A673 (cell line): ENCODE measurements at regions of chr9 and their contacts with region 1.

Region 1: GRCh38 chr9:34591248-34591916 is 1.9 kb upstream of the CNTFR start:
- DNase-seq: peak; percentile 74
- H3K4me3 ChIP-seq: peak overlapping the region; percentile 37
- H3K27ac ChIP-seq: no peak overlapping the region
- H3K4me1 ChIP-seq: peaks cover 15% of the 10 kb centered on the region
- H3K27me3 ChIP-seq: peaks cover 40% of the 10 kb centered on the region
- CTCF ChIP-seq: peak; percentile 93

Region 2: GRCh38 chr9:34178520-34179212 is 412.7 kb before region 1 on chr9 and contains the start of gene UBAP1:
- CTCF ChIA-PET with region 1: no interaction called
- POLR2A ChIA-PET with region 1: no interaction called
- intact Hi-C with region 1: no loop called
- DNase-seq: peak; percentile 99
- H3K4me3 ChIP-seq: peak within 1 kb of the TSS; percentile 78
- H3K27ac ChIP-seq: peak within 1 kb of the TSS; percentile 93
- H3K4me1 ChIP-seq: peaks cover 4% of the 10 kb centered on the region
- H3K27me3 ChIP-seq: no peaks in the 10 kb centered on the region
- CTCF ChIP-seq: no peak
- total RNA-seq, gene UBAP1: 35.9 and 36.0 TPM in 2 replicates

Region 3: GRCh38 chr9:34328987-34329832 is 262.2 kb before region 1 on chr9 and contains the starts of genes KIF24 and NUDT2:
- CTCF ChIA-PET with region 1: no interaction called
- POLR2A ChIA-PET with region 1: no interaction called
- intact Hi-C with region 1: loop called (anchors 5 kb)
- DNase-seq: peak; percentile 100
- H3K4me3 ChIP-seq: peak within 1 kb of the TSS; percentile 87
- H3K27ac ChIP-seq: peak within 1 kb of the TSS; percentile 91
- H3K4me1 ChIP-seq: peaks cover 30% of the 10 kb centered on the region
- H3K27me3 ChIP-seq: no peaks in the 10 kb centered on the region
- CTCF ChIP-seq: no peak
- total RNA-seq, gene KIF24: 10.6 and 11.6 TPM in 2 replicates
- total RNA-seq, gene NUDT2: 19.1 and 25.3 TPM in 2 replicates

Region 4: GRCh38 chr9:34346873-34347799 is 244.2 kb before region 1 on chr9:
- CTCF ChIA-PET with region 1: interaction called, 10 read pairs
- POLR2A ChIA-PET with region 1: no interaction called
- intact Hi-C with region 1: no loop called
- DNase-seq: peak; percentile 49
- H3K4me3 ChIP-seq: no peak overlapping the region
- H3K27ac ChIP-seq: no peak overlapping the region
- H3K4me1 ChIP-seq: no peaks in the 10 kb centered on the region
- H3K27me3 ChIP-seq: no peaks in the 10 kb centered on the region
- CTCF ChIP-seq: no peak

Region 5: DNA sequence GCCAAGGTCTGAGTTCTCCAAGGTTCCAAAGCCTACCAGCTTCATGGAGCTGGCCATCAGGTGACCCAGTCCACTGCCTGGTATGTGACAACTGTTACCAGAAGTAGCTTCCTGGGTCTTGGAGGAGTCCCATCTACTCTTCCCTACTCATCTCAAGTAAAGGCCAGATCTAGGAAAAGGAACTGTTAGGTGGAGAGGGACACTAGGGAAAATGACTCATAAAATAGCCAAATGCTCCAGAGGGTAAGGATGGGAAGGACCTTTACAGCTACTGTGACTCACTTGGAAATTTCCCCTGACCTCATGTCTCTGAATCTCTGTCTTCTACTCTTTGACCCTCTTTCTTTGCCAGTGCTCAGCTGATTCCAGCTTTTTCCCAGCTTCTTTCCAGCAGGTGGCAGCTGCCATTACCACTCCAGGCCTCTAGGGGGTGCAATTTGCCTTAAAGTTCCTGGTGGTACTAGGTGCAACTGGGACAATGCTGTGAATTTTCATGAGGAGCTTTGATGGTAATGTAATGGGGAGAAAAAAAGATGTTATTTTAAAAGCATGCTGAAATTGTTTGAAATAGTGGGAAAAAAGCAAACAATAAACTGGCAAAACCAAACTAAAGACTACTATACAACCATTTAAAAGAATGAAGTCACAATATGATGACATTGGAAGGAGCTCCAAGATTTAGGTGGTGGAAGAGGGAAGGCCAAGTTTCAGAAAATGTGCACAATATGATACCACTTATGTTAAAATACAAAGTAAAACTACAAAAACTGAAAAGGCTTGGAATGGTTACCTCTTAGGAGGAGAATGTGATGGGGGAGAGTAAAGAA is 187.6 kb before region 1 on chr9:
- CTCF ChIA-PET with region 1: interaction called, 19 read pairs
- POLR2A ChIA-PET with region 1: no interaction called
- intact Hi-C with region 1: loop called (anchors 2 kb)
- DNase-seq: peak; percentile 75
- H3K4me3 ChIP-seq: no peak overlapping the region
- H3K27ac ChIP-seq: no peak overlapping the region
- H3K4me1 ChIP-seq: no peaks in the 10 kb centered on the region
- H3K27me3 ChIP-seq: no peaks in the 10 kb centered on the region
- CTCF ChIP-seq: peak; percentile 95

Region 6: GRCh38 chr9:34437006-34437925 is 154.1 kb before region 1 on chr9:
- CTCF ChIA-PET with region 1: no interaction called
- POLR2A ChIA-PET with region 1: no interaction called
- intact Hi-C with region 1: loop called (anchors 2 kb)
- DNase-seq: peak; percentile 81
- H3K4me3 ChIP-seq: no peak overlapping the region
- H3K27ac ChIP-seq: no peak overlapping the region
- H3K4me1 ChIP-seq: peaks cover 25% of the 10 kb centered on the region
- H3K27me3 ChIP-seq: no peaks in the 10 kb centered on the region
- CTCF ChIP-seq: peak; percentile 88

Region 7: DNA sequence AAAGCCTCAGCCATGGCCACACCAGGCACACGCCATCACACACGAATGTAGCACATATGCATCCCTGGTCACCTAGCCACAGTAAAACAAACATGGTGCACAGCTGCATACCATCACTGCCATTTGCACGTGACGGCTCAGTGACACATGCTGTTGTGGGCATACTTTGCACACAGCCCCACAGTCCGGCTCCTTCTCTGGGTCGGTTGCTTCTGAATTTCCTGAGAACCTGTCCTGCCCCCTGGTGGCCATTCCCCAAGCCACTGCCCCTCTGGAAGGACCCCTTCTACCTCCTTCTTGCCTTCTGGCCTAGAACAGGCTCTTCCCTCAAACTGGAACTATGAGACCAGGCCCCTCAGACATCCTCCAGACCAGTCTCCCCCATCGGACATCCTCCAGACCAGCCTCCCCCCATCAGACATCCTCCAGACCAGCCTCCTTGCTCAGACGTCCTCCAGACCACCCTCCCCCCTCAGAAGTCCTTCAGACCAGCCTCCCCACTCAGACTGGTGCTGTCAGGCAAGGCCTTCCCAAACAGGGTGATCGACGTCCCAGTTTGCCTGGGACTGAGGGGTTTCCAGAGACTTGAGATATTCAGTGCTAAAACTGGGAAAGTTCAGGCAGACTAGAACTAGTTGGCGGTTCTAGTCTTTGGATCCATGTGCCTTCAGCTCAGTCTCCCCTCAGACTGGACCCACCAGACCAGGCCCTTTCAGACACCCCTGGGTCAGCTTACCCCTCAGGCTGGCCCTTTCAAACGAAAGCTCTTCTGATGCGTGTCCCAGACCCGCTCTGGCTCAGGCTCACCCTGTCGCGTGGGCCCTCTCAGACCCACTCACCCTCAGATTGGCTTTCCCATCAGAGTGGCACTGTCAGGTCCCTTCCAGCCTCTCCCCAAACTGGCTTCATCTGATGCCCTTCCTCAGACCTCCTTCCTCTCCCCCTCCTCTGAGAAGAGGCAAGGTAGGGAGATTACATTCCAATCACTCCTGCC is 44.3 kb before region 1 on chr9:
- CTCF ChIA-PET with region 1: interaction called, 12 read pairs
- POLR2A ChIA-PET with region 1: no interaction called
- intact Hi-C with region 1: loop called (anchors 1 kb)
- DNase-seq: peak; percentile 83
- H3K4me3 ChIP-seq: no peak overlapping the region
- H3K27ac ChIP-seq: no peak overlapping the region
- H3K4me1 ChIP-seq: no peaks in the 10 kb centered on the region
- H3K27me3 ChIP-seq: no peaks in the 10 kb centered on the region
- CTCF ChIP-seq: peak; percentile 78